GM12878 (cell line): ENCODE measurements at regions of chr1 and their contacts with region 1.

Region 1: GRCh38 chr1:220217383-220217988 is 54.8 kb downstream of the RAB3GAP2 start:
- DNase-seq: no peak
- ATAC-seq: peak; percentile 14; the same call in 1 of the 3 replicates
- H3K4me3 ChIP-seq: no peak overlapping the region
- H3K27ac ChIP-seq: no peak overlapping the region
- H3K4me1 ChIP-seq: peaks cover 14% of the 10 kb centered on the region
- H3K27me3 ChIP-seq: no peaks in the 10 kb centered on the region
- CTCF ChIP-seq: peak; percentile 45 to 54 (median 53); a peak in 5 of 6 replicates
- EP300 ChIP-seq: no peak
- POLR2A ChIP-seq: no peak
- RAD21 ChIP-seq: peak; percentile 37

Region 2: DNA sequence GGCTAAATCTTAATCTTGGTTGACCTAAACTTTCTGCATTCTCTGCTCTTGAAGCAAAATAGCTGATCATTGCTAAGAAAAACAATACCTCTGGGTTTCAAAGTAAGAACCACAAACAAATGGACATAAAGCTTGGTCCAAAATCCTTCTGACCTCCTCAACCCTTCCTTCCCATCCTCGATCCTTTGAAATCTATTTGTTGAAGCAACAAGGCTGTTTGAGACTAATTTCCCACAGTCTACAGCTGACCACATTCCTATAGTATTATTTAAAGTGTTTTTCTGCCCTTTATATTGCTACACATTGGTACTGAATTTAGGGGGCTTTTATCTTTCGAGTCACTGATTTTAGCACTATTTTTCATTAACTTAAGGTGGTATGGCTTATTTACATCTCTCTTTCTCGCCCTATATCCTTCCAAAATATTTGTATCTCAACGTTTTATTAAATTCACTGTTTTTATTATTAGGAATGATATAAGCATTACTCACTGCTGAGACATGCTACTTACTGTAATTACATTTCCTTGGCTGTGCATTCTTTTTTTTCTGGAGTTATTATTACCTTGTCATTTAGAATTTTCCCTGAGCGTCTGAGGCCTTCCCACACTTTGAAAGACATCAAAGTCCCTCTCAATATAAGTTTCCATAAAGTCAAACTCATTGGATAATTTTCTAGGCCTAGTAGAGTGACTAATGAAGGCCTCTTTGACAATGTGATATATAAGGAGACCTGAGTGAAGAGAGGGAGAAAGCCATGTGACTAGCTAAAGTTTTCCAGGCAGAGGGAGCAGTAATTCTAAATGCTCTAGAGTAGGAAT is 19.1 kb before region 1 on chr1:
- CTCF ChIA-PET with region 1: interaction called, 14 read pairs
- POLR2A ChIA-PET with region 1: no interaction called
- RAD21 ChIA-PET with region 1: interaction called, 8 read pairs
- SMC1A ChIA-PET with region 1: interaction called, 6 read pairs
- in situ Hi-C with region 1: no loop called
- intact Hi-C with region 1: no loop called
- DNase-seq: no peak
- ATAC-seq: no peak
- H3K4me3 ChIP-seq: no peak overlapping the region
- H3K27ac ChIP-seq: no peak overlapping the region
- H3K4me1 ChIP-seq: no peaks in the 10 kb centered on the region
- H3K27me3 ChIP-seq: no peaks in the 10 kb centered on the region
- CTCF ChIP-seq: no peak
- EP300 ChIP-seq: no peak
- POLR2A ChIP-seq: no peak
- RAD21 ChIP-seq: no peak

Region 3: DNA sequence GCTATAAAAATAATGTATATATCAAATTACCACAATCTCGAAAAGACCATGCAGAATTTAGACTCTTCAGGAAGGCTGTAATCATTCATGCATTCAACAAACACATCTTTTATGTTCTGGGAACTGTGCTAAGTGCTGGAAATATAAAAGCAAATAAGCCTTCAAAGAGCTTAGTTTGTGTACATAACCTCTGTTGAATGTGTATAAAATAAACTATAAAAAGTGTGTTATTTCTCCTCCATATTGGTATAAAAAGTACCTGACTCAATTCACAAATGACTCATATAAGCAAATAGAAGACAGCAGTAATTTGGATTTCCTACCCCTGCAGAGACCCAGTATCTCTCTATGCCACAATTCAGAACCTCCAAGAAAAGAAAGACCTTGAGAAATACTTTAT is 18.0 kb after region 1 on chr1:
- CTCF ChIA-PET with region 1: interaction called, 35 read pairs
- POLR2A ChIA-PET with region 1: interaction called, 18 read pairs
- RAD21 ChIA-PET with region 1: interaction called, 31 read pairs
- SMC1A ChIA-PET with region 1: interaction called, 57 read pairs
- in situ Hi-C with region 1: no loop called
- intact Hi-C with region 1: no loop called
- DNase-seq: no peak
- ATAC-seq: no peak
- H3K4me3 ChIP-seq: no peak overlapping the region
- H3K27ac ChIP-seq: no peak overlapping the region
- H3K4me1 ChIP-seq: no peaks in the 10 kb centered on the region
- H3K27me3 ChIP-seq: no peaks in the 10 kb centered on the region
- CTCF ChIP-seq: no peak
- EP300 ChIP-seq: no peak
- POLR2A ChIP-seq: no peak
- RAD21 ChIP-seq: no peak

Region 4: DNA sequence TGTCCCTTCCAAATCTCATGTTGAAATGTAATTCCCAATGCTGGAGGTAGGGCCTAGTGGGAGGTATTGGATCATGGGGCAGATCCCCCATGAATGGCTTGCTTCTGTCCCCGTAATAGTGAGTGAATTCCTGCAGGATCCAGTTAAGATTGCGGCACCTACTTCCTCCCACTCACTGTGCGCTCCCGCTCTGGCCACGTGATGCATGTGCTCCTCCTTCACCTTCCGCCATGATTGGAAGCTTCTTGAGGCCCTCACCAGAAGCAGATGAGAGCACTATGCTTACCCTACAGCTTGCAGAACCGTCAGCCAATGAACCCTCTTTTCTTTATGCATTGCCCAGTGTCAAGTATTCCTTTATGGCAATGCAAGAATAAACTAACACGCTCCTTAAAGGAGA is 69.6 kb after region 1 on chr1:
- CTCF ChIA-PET with region 1: interaction called, 69 read pairs
- POLR2A ChIA-PET with region 1: no interaction called
- RAD21 ChIA-PET with region 1: interaction called, 59 read pairs
- SMC1A ChIA-PET with region 1: interaction called, 250 read pairs
- in situ Hi-C with region 1: no loop called
- intact Hi-C with region 1: no loop called
- DNase-seq: no peak
- ATAC-seq: no peak
- H3K4me3 ChIP-seq: no peak overlapping the region
- H3K27ac ChIP-seq: no peak overlapping the region
- H3K4me1 ChIP-seq: no peaks in the 10 kb centered on the region
- H3K27me3 ChIP-seq: no peaks in the 10 kb centered on the region
- CTCF ChIP-seq: no peak
- EP300 ChIP-seq: no peak
- POLR2A ChIP-seq: no peak
- RAD21 ChIP-seq: no peak

Region 5: DNA sequence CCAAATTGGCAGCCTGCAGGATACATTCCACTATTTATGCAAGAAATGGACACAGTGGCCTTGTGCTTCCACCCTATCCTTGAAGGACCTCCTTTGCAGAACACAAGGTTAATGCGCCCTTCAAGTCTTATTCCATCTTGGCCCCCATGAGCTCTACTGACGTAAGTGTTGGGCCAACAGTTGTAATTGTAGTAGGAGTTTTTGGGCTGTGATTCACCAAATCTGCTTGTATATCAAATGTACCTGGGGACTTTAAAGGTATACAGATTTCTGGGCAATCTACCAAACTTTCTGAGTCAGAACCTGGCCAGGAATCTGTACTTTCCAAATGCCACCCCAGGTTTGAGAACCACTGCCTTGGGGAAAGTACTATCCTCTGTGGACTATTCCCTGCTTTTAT is 209.5 kb after region 1 on chr1:
- CTCF ChIA-PET with region 1: no interaction called
- POLR2A ChIA-PET with region 1: no interaction called
- RAD21 ChIA-PET with region 1: no interaction called
- SMC1A ChIA-PET with region 1: no interaction called
- in situ Hi-C with region 1: no loop called
- intact Hi-C with region 1: loop called (anchors 10 kb)
- DNase-seq: no peak
- ATAC-seq: no peak
- H3K4me3 ChIP-seq: no peak overlapping the region
- H3K27ac ChIP-seq: no peak overlapping the region
- H3K4me1 ChIP-seq: no peaks in the 10 kb centered on the region
- H3K27me3 ChIP-seq: no peaks in the 10 kb centered on the region
- CTCF ChIP-seq: no peak
- EP300 ChIP-seq: no peak
- POLR2A ChIP-seq: no peak
- RAD21 ChIP-seq: no peak